Activated CD4-positive, alpha-beta T cell treated with anti-CD3 and anti-CD28 coated beads for 36 hours (primary cell): ENCODE measurements at regions of chr9 and their contacts with region 1.

Region 1: DNA sequence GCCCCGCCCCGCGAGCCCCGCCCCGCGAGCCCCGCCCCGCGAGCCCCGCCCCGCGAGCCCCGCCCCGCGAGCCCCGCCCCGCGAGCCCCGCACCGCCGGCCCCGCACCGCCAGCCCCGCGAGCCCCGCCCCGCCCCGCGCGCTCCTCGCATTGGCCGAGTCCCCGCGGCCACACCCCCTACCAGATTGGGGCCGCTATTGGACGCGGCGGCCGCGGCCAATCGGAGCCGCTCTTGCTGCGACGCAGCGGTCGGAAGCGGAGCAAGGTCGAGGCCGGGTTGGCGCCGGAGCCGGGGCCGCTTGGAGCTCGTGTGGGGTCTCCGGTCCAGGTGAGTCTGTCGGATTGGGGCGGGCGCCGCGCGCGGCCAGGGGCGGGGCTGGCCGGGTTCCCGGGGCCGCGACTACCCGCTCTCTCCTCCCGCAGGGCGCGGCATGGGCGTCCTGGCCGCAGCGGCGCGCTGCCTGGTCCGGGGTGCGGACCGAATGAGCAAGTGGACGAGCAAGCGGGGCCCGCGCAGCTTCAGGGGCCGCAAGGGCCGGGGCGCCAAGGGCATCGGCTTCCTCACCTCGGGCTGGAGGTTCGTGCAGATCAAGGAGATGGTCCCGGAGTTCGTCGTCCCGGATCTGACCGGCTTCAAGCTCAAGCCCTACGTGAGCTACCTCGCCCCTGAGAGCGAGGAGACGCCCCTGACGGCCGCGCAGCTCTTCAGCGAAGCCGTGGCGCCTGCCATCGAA is at the start of gene MRPL41:
- DNase-seq: peak; percentile 91
- ATAC-seq: peak; percentile 93
- H3K4me3 Mint-ChIP-seq: peak within 1 kb of the TSS; percentile 77
- H3K27ac Mint-ChIP-seq: peak within 1 kb of the TSS; percentile 63
- H3K4me1 Mint-ChIP-seq: peaks cover 11% of the 10 kb centered on the region
- H3K27me3 Mint-ChIP-seq: no peaks in the 10 kb centered on the region
- total RNA-seq, gene MRPL41: 20.9 to 26.8 TPM

Region 2: GRCh38 chr9:135992486-135993408 is 1559.1 kb before region 1 on chr9:
- CTCF ChIA-PET with region 1: no interaction called
- POLR2A ChIA-PET with region 1: no interaction called
- intact Hi-C with region 1: no loop called
- DNase-seq: peak; percentile 68
- ATAC-seq: peak; percentile 71
- H3K4me3 Mint-ChIP-seq: no peak overlapping the region
- H3K27ac Mint-ChIP-seq: no peak overlapping the region
- H3K4me1 Mint-ChIP-seq: peaks cover 17% of the 10 kb centered on the region
- H3K27me3 Mint-ChIP-seq: no peaks in the 10 kb centered on the region

Region 3: GRCh38 chr9:137406876-137407589 is 144.8 kb before region 1 on chr9:
- CTCF ChIA-PET with region 1: no interaction called
- POLR2A ChIA-PET with region 1: no interaction called
- intact Hi-C with region 1: no loop called
- DNase-seq: peak; percentile 84
- ATAC-seq: peak; percentile 94
- H3K4me3 Mint-ChIP-seq: no peak overlapping the region
- H3K27ac Mint-ChIP-seq: no peak overlapping the region
- H3K4me1 Mint-ChIP-seq: peaks cover 2% of the 10 kb centered on the region
- H3K27me3 Mint-ChIP-seq: no peaks in the 10 kb centered on the region

Region 4: GRCh38 chr9:137453643-137454081 is 98.2 kb before region 1 on chr9:
- CTCF ChIA-PET with region 1: interaction called, 4 read pairs
- POLR2A ChIA-PET with region 1: no interaction called
- intact Hi-C with region 1: loop called in 1 of 2 experiments (anchors 1 kb)
- DNase-seq: peak; percentile 84
- ATAC-seq: peak; percentile 83
- H3K4me3 Mint-ChIP-seq: no peak overlapping the region
- H3K27ac Mint-ChIP-seq: no peak overlapping the region
- H3K4me1 Mint-ChIP-seq: peaks cover 38% of the 10 kb centered on the region
- H3K27me3 Mint-ChIP-seq: no peaks in the 10 kb centered on the region

Region 5: GRCh38 chr9:137492464-137493162 is 59.2 kb before region 1 on chr9:
- CTCF ChIA-PET with region 1: no interaction called
- POLR2A ChIA-PET with region 1: no interaction called
- intact Hi-C with region 1: loop called in 1 of 2 experiments (anchors 1 kb)
- DNase-seq: peak; percentile 63
- ATAC-seq: peak; percentile 85
- H3K4me3 Mint-ChIP-seq: no peak overlapping the region
- H3K27ac Mint-ChIP-seq: no peak overlapping the region
- H3K4me1 Mint-ChIP-seq: peaks cover 3% of the 10 kb centered on the region
- H3K27me3 Mint-ChIP-seq: no peaks in the 10 kb centered on the region

Region 6: DNA sequence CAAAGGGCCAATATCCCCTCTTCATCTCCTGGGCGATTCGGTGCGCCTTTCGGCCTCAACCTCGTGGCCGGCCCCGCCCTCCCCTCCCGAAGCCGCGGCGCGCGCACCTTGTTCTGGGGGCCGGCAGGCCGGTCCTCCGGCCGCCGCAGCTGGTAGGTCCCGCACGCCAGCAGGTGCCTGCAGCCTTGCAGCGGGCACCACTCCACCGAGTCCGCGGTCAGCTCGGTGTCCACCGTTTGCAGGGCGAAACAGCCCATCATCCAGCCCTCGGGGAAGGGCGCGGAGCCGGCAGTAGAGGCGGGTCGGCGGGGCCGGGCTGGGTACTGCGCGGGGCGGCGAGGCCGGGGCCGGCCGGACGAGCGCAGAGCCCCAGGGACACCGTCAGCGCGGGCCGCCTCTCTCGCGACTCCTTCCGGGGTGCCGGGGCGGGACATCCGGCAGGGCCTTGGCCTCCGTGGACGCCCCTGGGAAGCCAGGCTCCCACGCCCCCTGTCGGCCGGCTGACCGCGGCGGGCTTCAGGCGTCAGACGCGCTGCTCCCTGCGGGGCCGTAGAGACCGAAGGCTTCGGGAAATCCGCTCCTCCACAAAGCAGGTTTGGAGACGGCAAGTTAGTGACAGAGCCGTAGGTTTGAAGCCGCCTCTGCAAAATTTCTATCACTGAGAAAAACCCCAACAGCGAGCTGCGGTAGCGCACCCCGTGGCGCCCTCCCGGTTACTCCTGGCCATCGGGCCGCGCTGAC is 26.9 kb after region 1 on chr9 and contains the start of gene DPH7:
- CTCF ChIA-PET with region 1: interaction called, 6 read pairs
- POLR2A ChIA-PET with region 1: no interaction called
- intact Hi-C with region 1: loop called in 1 of 2 experiments (anchors 1 kb)
- DNase-seq: peak; percentile 98
- ATAC-seq: peak; percentile 99
- H3K4me3 Mint-ChIP-seq: peak within 1 kb of the TSS; percentile 80
- H3K27ac Mint-ChIP-seq: peak within 1 kb of the TSS; percentile 55
- H3K4me1 Mint-ChIP-seq: peaks cover 28% of the 10 kb centered on the region
- H3K27me3 Mint-ChIP-seq: no peaks in the 10 kb centered on the region
- total RNA-seq, gene DPH7: 23.5 to 29.1 TPM

Region 7: GRCh38 chr9:137618105-137619067 is 66.6 kb after region 1 on chr9 and contains the start of gene EHMT1:
- CTCF ChIA-PET with region 1: no interaction called
- POLR2A ChIA-PET with region 1: no interaction called
- intact Hi-C with region 1: loop called in 1 of 2 experiments (anchors 1 kb)
- DNase-seq: peak; percentile 92
- ATAC-seq: peak; percentile 82
- H3K4me3 Mint-ChIP-seq: peak within 1 kb of the TSS; percentile 85
- H3K27ac Mint-ChIP-seq: peak within 1 kb of the TSS; percentile 90
- H3K4me1 Mint-ChIP-seq: peaks cover 37% of the 10 kb centered on the region
- H3K27me3 Mint-ChIP-seq: no peaks in the 10 kb centered on the region
- total RNA-seq, gene EHMT1: 66.6 to 76.7 TPM